HCT116 (cell line): ENCODE measurements at regions of chr3 and their contacts with region 1.

Region 1: GRCh38 chr3:30924763-30925162 is 30.3 kb upstream of the GADL1 start:
- DNase-seq: no peak
- ATAC-seq: no peak
- H3K4me3 ChIP-seq: no peak overlapping the region
- H3K27ac ChIP-seq: no peak overlapping the region
- H3K4me1 ChIP-seq: no peaks in the 10 kb centered on the region
- H3K27me3 ChIP-seq: no peaks in the 10 kb centered on the region
- CTCF ChIP-seq: no peak
- POLR2A ChIP-seq: no peak
- RAD21 ChIP-seq: no peak

Region 2: DNA sequence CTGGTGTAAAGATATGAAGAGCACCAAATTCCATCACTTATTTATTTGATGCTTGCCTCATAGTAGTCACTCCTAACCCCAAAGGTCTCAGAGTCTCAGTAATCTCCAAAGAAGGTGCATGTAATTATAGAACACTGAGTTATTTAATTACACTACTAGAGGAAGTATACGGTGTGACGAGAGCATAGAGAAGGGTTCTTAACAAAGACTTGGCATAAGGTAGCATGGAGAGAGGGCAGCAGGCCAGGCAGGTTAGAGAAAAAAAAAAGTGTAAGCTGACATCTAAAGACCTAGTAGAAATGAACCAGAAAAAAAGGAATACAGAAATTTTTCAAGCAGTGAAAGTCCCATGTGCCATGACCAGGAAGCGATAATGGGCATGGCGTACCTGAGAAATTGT is 531.7 kb before region 1 on chr3:
- CTCF ChIA-PET with region 1: no interaction called
- POLR2A ChIA-PET with region 1: no interaction called
- RAD21 ChIA-PET with region 1: no interaction called
- intact Hi-C with region 1: no loop called
- DNase-seq: no peak
- ATAC-seq: no peak
- H3K4me3 ChIP-seq: no peak overlapping the region
- H3K27ac ChIP-seq: no peak overlapping the region
- H3K4me1 ChIP-seq: no peaks in the 10 kb centered on the region
- H3K27me3 ChIP-seq: no peaks in the 10 kb centered on the region
- CTCF ChIP-seq: no peak
- POLR2A ChIP-seq: no peak
- RAD21 ChIP-seq: no peak

Region 3: DNA sequence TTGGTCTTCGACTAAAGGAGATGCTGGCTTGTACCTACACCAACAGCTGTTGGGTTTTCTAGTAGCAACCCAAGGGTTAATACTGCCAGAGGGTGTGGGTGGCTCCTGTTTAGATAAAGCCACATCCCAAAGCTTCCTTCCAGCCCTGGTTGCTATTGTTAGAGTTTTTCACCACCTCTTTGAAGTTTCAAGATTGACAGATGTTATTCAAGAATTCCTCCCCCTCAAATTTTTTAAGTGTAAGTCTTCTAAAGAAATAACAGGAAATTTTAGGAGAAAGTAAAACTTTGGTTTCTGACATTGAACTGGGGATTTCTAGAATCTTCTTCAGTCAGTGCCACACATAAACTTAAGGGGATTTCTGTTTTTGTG is 257.5 kb before region 1 on chr3:
- CTCF ChIA-PET with region 1: no interaction called
- POLR2A ChIA-PET with region 1: no interaction called
- RAD21 ChIA-PET with region 1: no interaction called
- intact Hi-C with region 1: no loop called
- DNase-seq: no peak
- ATAC-seq: peak; percentile 59; the same call in 1 of the 2 replicates
- H3K4me3 ChIP-seq: no peak overlapping the region
- H3K27ac ChIP-seq: no peak overlapping the region
- H3K4me1 ChIP-seq: peaks cover 43 to 49% of the 10 kb centered on the region in 2 experiments
- H3K27me3 ChIP-seq: no peaks in the 10 kb centered on the region
- CTCF ChIP-seq: no peak
- POLR2A ChIP-seq: no peak
- RAD21 ChIP-seq: no peak

Region 4: GRCh38 chr3:31448035-31448881 is 523.5 kb after region 1 on chr3:
- CTCF ChIA-PET with region 1: no interaction called
- POLR2A ChIA-PET with region 1: no interaction called
- RAD21 ChIA-PET with region 1: no interaction called
- intact Hi-C with region 1: loop called (anchors 5 kb)
- DNase-seq: peak; percentile 24
- ATAC-seq: peak; percentile 97
- H3K4me3 ChIP-seq: no peak overlapping the region
- H3K27ac ChIP-seq: no peak overlapping the region
- H3K4me1 ChIP-seq: peaks cover 0 to 9% of the 10 kb centered on the region in 2 experiments; a peak in 1 of 4 replicates
- H3K27me3 ChIP-seq: no peaks in the 10 kb centered on the region
- CTCF ChIP-seq: peak; percentile 35 to 93 (median 78); a peak in 5 of 6 replicates
- POLR2A ChIP-seq: no peak
- RAD21 ChIP-seq: peak; percentile 72

Region 5: DNA sequence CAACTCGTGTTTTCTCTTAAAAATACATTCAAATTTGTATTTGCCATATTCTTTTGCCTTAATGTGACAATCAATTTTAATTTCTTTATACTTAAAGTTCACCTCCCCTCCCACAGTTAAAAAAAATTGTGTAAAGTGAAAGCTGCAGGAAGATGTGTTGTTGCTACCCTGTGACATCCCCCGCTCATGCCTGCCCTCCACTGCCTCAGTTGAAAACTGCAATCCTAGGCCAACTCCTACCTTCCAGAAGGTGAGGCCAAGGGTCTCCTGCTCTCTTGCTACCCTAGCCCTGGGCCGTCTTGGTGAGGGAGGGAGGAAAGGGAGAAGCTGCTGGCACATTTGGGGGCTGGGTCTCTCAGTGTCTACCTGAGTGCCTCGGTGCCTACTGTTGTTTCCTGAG is 1409.9 kb after region 1 on chr3:
- CTCF ChIA-PET with region 1: no interaction called
- POLR2A ChIA-PET with region 1: no interaction called
- RAD21 ChIA-PET with region 1: no interaction called
- intact Hi-C with region 1: loop called (anchors 10 kb)
- DNase-seq: no peak
- ATAC-seq: peak; percentile 75
- H3K4me3 ChIP-seq: no peak overlapping the region
- H3K27ac ChIP-seq: no peak overlapping the region
- H3K4me1 ChIP-seq: no peaks in the 10 kb centered on the region
- H3K27me3 ChIP-seq: no peaks in the 10 kb centered on the region
- CTCF ChIP-seq: peak; percentile 44 to 55 (median 52); a peak in 5 of 6 replicates
- POLR2A ChIP-seq: no peak
- RAD21 ChIP-seq: peak; percentile 69